ENCODE measurements at regions of chr4 and their contacts with region 1.

Region 1: DNA sequence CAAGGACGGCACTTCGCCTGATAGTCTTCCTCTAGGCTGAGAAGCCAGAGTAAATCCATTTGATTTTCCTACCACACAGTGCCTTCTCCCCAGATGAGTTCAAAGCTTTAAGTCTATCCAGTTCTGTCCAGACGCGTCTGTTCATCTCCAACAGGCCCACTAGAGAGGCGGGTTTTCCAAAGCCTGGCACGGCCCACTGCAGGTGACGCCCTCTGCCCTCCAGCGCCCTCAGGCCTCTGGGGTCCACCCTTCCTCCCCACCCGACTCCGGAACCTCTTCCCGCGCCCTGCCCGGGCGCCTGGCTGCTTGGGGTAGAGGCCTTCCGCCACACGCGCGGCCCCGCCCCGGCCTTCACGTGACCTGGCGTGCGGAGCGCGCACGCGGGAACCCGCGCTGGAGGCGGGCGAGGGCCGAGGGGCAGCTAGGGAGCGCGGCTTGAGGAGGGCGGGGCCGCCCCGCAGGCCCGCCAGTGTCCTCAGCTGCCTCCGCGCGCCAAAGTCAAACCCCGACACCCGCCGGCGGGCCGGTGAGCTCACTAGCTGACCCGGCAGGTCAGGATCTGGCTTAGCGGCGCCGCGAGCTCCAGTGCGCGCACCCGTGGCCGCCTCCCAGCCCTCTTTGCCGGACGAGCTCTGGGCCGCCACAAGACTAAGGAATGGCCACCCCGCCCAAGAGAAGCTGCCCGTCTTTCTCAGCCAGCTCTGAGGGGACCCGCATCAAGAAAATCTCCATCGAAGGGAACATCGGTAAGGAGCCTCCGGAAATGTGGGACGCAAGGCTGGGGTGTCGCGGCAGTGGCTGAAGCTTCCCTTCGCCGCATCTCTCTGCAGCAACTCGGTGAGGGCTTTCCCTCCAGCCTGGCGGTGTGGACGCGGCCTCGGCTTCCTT is at the start of gene DCK:
- DNase-seq: peak; percentile 95
- H3K4me3 ChIP-seq: peak within 1 kb of the TSS; percentile 92
- H3K27ac ChIP-seq: peak within 1 kb of the TSS; percentile 94
- H3K4me1 ChIP-seq: peaks cover 35% of the 10 kb centered on the region
- CTCF ChIP-seq: 0 out of 2 replicates have a peak, but pooled peaks have one; percentile 22
- total RNA-seq, gene DCK: 78.2 and 90.1 TPM in 2 replicates

Region 2: DNA sequence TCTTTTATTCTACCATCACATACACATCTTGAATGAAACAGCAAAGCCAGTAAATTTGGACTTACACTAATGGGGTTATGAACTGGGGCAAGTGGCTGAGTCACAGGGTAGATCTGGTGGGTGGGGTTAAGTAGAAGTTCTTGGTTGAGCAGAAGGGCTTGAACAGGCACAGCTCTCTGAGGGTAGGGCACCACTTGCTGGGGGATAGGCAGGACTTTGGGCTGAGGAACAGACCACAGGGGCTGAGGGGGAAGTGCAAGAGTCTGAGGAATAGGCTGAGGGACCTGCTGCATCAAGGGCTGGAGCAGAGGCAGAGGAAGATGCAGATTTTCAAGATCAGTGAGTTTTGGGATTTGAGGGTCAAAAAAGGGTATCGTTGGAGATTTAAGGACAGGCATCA is 1036.2 kb before region 1 on chr4:
- CTCF ChIA-PET with region 1: no interaction called
- POLR2A ChIA-PET with region 1: no interaction called
- intact Hi-C with region 1: no loop called
- DNase-seq: no peak
- H3K4me3 ChIP-seq: no peak overlapping the region
- H3K27ac ChIP-seq: no peak overlapping the region
- H3K4me1 ChIP-seq: no peaks in the 10 kb centered on the region
- CTCF ChIP-seq: no peak

Region 3: DNA sequence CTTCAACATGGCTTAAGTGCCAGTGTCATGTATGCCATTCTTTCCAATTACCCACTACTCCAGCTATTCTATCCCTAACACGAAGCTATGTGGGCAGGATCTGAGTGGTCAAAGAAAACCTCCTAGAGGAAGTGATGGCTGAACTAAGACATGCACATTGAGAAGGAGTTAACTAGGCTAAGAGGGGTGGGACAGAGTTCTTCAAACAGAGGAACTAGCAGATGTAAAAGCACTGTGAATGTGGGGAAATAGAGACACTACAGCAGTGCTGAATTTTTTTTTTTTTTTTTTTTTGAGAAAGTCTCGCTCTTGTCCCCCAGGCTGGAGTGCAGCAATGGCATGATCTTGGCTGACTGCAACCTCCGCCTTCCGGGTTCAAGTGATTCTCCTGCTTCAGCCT is 333.3 kb before region 1 on chr4:
- CTCF ChIA-PET with region 1: no interaction called
- POLR2A ChIA-PET with region 1: interaction called, 40 read pairs
- intact Hi-C with region 1: loop called (anchors 5 kb)
- DNase-seq: peak; percentile 63
- H3K4me3 ChIP-seq: peak overlapping the region; percentile 98
- H3K27ac ChIP-seq: peak overlapping the region; percentile 91
- H3K4me1 ChIP-seq: peaks cover 56% of the 10 kb centered on the region
- CTCF ChIP-seq: no peak

Region 4: DNA sequence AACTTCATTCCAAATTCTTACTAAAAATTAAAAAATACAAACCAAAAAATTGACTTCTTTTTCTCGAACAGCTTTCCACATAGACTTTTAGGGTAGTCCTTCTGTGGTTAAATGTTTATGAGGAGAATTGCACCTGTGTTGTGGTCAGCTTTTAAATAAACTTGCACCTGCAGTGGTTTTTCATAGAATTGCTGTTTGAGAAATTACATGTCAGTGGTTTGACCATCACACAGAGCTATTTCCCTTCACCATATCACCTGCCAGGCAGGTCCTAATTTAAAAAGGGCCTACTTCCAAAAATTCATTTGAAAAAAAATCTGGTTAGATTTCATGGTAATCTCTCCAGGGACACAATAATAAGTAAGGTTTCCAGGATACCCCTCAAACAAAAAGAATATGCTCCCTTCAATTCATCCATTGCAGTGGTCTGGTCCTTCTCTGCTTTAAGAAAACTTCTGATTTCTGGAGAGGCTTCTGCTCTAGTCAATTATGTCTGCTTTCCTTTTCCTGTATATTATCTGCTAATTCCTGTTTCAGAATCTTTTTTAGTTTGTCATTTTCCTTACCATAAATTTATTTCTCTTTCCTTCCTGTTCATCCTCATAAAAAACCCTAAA is 314.9 kb before region 1 on chr4:
- CTCF ChIA-PET with region 1: interaction called, 3 read pairs
- POLR2A ChIA-PET with region 1: interaction called, 15 read pairs
- intact Hi-C with region 1: loop called (anchors 2 kb)
- DNase-seq: peak; percentile 96
- H3K4me3 ChIP-seq: peak overlapping the region; percentile 44
- H3K27ac ChIP-seq: peak overlapping the region; percentile 97
- H3K4me1 ChIP-seq: peaks cover 88% of the 10 kb centered on the region
- CTCF ChIP-seq: no peak

Region 5: GRCh38 chr4:70754470-70754869 is 239.0 kb before region 1 on chr4:
- CTCF ChIA-PET with region 1: no interaction called
- POLR2A ChIA-PET with region 1: interaction called, 4 read pairs
- intact Hi-C with region 1: loop called (anchors 5 kb)
- DNase-seq: peak; percentile 70
- H3K4me3 ChIP-seq: peak overlapping the region; percentile 60
- H3K27ac ChIP-seq: peak overlapping the region; percentile 91
- H3K4me1 ChIP-seq: peaks cover 74% of the 10 kb centered on the region
- CTCF ChIP-seq: no peak

Region 6: DNA sequence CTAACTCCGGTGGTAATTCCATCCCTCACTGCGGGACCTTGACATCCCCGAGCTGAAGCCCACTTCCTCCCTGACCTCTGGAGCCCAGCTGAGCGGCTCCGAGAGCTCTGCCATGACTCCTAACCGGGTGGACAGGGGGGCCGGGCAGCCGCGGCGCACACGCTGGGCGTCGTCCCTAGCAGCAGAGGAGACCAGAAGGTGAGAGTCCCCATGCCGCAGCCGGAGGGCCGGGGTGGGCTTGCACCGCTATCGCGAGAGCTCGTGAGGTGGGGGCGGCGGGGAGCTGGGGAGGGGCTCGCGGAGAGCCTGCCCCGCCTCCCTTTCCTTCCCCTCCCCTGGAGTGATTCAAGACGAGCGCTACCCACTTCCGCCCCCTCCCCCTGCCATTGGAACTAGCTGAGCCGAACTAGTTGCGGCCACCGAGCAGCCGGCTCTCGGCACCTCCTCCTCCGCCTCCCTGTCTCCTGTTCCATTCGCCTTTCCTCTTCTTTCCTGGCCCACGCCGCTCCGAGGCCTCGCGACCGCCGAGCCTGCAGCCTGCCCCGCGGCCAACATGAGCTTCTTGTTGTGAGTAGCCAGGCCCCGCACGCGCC is 91.3 kb before region 1 on chr4 and contains the start of gene MOB1B:
- CTCF ChIA-PET with region 1: no interaction called
- POLR2A ChIA-PET with region 1: interaction called, 22 read pairs
- intact Hi-C with region 1: loop called (anchors 1 kb)
- DNase-seq: peak; percentile 91
- H3K4me3 ChIP-seq: peak within 1 kb of the TSS; percentile 95
- H3K27ac ChIP-seq: peak within 1 kb of the TSS; percentile 46
- H3K4me1 ChIP-seq: peaks cover 15% of the 10 kb centered on the region
- CTCF ChIP-seq: 0 out of 2 replicates have a peak, but pooled peaks have one; percentile 24
- total RNA-seq, gene MOB1B: 3.9 and 4.7 TPM in 2 replicates

Region 7: GRCh38 chr4:70943114-70943513 is 50.3 kb before region 1 on chr4:
- CTCF ChIA-PET with region 1: interaction called, 3 read pairs
- POLR2A ChIA-PET with region 1: interaction called, 13 read pairs
- intact Hi-C with region 1: no loop called
- DNase-seq: peak; percentile 77
- H3K4me3 ChIP-seq: peak overlapping the region; percentile 36
- H3K27ac ChIP-seq: peak overlapping the region; percentile 65
- H3K4me1 ChIP-seq: peaks cover 38% of the 10 kb centered on the region
- CTCF ChIP-seq: no peak

Measured in OCI-LY7 (cell line).